ENCODE measurements at regions of chr2 and their contacts with region 1.

Region 1: GRCh38 chr2:171598713-171599319 is 76.5 kb downstream of the CYBRD1 start:
- DNase-seq: no peak
- ATAC-seq: peak; percentile 96
- H3K4me3 Mint-ChIP-seq: no peak overlapping the region
- H3K27ac Mint-ChIP-seq: no peak overlapping the region
- H3K4me1 Mint-ChIP-seq: peaks cover 3% of the 10 kb centered on the region
- H3K27me3 Mint-ChIP-seq: peaks cover 4% of the 10 kb centered on the region
- CTCF ChIP-seq: no peak

Region 2: GRCh38 chr2:171625006-171625405 is 26.2 kb after region 1 on chr2:
- CTCF ChIA-PET with region 1: no interaction called
- POLR2A ChIA-PET with region 1: no interaction called
- intact Hi-C with region 1: no loop called
- DNase-seq: no peak
- ATAC-seq: no peak
- H3K4me3 Mint-ChIP-seq: no peak overlapping the region
- H3K27ac Mint-ChIP-seq: no peak overlapping the region
- H3K4me1 Mint-ChIP-seq: no peaks in the 10 kb centered on the region
- H3K27me3 Mint-ChIP-seq: peaks cover 5% of the 10 kb centered on the region
- CTCF ChIP-seq: no peak

Region 3: GRCh38 chr2:171703574-171704347 is 104.9 kb after region 1 on chr2:
- CTCF ChIA-PET with region 1: interaction called, 3 read pairs
- POLR2A ChIA-PET with region 1: no interaction called
- intact Hi-C with region 1: loop called (anchors 2 kb)
- DNase-seq: no peak
- ATAC-seq: no peak
- H3K4me3 Mint-ChIP-seq: no peak overlapping the region
- H3K27ac Mint-ChIP-seq: no peak overlapping the region
- H3K4me1 Mint-ChIP-seq: peaks cover 18% of the 10 kb centered on the region
- H3K27me3 Mint-ChIP-seq: no peaks in the 10 kb centered on the region
- CTCF ChIP-seq: no peak

Region 4: GRCh38 chr2:171798252-171798741 is 199.5 kb after region 1 on chr2:
- CTCF ChIA-PET with region 1: no interaction called
- POLR2A ChIA-PET with region 1: no interaction called
- intact Hi-C with region 1: loop called (anchors 10 kb)
- DNase-seq: no peak
- ATAC-seq: no peak
- H3K4me3 Mint-ChIP-seq: no peak overlapping the region
- H3K27ac Mint-ChIP-seq: no peak overlapping the region
- H3K4me1 Mint-ChIP-seq: no peaks in the 10 kb centered on the region
- H3K27me3 Mint-ChIP-seq: no peaks in the 10 kb centered on the region
- CTCF ChIP-seq: no peak

Region 5: DNA sequence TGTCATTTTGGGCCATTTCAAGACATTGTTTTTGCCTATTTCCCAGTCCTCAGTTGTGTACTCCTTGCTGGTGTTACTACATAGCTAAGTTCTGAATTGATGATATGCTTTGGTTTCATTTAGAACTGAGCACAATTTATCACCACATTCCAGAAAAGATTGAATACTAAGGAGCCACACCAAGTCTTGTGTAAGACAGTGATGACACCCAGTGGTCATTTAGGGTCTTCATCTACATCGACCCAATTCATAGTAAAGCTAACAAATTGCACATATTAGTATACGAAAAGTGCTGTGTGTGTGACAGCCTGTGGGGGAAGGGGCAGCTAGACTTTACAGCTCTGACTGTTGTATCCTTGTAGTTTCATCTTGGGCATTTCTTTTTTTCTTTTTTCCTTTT is 514.8 kb after region 1 on chr2:
- CTCF ChIA-PET with region 1: interaction called, 17 read pairs
- POLR2A ChIA-PET with region 1: no interaction called
- intact Hi-C with region 1: loop called (anchors 1 kb)
- DNase-seq: no peak
- ATAC-seq: no peak
- H3K4me3 Mint-ChIP-seq: no peak overlapping the region
- H3K27ac Mint-ChIP-seq: no peak overlapping the region
- H3K4me1 Mint-ChIP-seq: no peaks in the 10 kb centered on the region
- H3K27me3 Mint-ChIP-seq: peaks cover 28% of the 10 kb centered on the region
- CTCF ChIP-seq: no peak

Region 6: GRCh38 chr2:172131713-172132555 is 533.1 kb after region 1 on chr2:
- CTCF ChIA-PET with region 1: interaction called, 12 read pairs
- POLR2A ChIA-PET with region 1: no interaction called
- intact Hi-C with region 1: loop called (anchors 1 kb)
- DNase-seq: no peak
- ATAC-seq: no peak
- H3K4me3 Mint-ChIP-seq: no peak overlapping the region
- H3K27ac Mint-ChIP-seq: no peak overlapping the region
- H3K4me1 Mint-ChIP-seq: no peaks in the 10 kb centered on the region
- H3K27me3 Mint-ChIP-seq: peaks cover 12% of the 10 kb centered on the region
- CTCF ChIP-seq: no peak

Measured in activated B cell treated with CpG ODN at 0.5 μM for 24 hours (primary cell).